Posterior cingulate gyrus (tissue), 11 donors: ENCODE measurements at regions of chr6 and their contacts with region 1.

Region 1: DNA sequence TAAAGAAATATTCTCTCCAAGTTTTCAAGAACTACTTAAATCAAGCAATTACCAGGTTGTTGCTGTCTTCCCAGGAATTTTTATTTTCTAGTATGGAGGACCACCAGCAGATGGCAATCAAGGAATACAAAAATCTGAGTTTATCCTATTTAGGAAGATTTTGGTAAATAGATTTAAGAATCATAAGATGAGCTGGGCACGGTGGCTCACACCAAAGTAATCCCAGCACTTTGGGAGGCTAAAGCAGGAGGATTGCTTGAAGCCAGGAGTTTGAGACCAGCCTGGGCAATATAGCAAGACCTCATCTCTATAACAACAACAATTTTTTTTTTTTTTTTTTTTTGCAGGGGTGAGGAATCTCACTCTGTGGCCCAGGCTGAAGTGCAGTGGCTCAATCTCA is 19.3 kb upstream of the SEC63 start:
- DNase-seq: no peak

Region 2: DNA sequence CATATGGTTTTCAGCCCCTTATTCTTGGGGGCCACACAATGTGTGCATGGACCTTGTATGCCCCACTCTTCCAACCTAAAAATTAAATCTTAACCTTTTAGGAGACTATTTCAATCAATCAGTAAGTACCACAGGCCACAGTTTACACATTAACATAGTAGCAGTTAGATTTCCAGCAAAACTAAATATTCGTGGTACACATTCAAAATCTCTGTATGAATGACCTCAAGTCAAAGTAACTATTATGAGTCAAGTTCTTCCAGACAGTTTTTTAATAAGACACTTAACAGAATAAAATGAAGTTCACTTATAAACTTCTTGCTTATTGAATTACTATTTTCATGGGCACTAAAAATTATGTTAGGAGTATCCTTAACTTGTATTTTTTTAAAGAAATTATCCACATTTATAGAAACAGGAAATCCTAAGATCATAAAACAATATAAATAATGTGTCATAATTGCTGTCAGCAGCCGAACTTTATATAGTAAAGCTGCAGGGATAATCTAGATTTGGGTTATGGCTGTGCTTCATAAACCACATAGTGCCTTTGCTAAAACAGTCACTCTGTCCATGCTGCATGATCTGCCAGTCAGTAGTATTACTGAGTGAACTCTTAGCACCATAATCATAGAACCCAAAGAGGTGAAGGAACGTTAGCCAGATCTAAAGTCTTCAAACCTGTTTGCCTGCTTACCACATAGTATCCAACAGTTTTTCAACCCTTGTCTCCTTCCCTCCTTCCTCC is 40.9 kb before region 1 on chr6:
- intact Hi-C with region 1: no loop called
- DNase-seq: no peak

Region 3: GRCh38 chr6:108052706-108053105 is 75.4 kb after region 1 on chr6:
- intact Hi-C with region 1: loop called (anchors 1 kb)
- DNase-seq: no peak

Region 4: GRCh38 chr6:108526739-108527174 is 549.5 kb after region 1 on chr6:
- intact Hi-C with region 1: loop called (anchors 2 kb)
- DNase-seq: no peak